ENCODE measurements at regions of chr6 and their contacts with region 1.

Region 1: GRCh38 chr6:73817253-73817652 is 121.2 kb downstream of the CD109 start:
- DNase-seq: no peak
- H3K4me3 ChIP-seq: no peak overlapping the region
- H3K27ac ChIP-seq: no peak overlapping the region
- H3K4me1 ChIP-seq: no peaks in the 10 kb centered on the region
- H3K27me3 ChIP-seq: no peaks in the 10 kb centered on the region
- CTCF ChIP-seq: no peak
- EP300 ChIP-seq: no peak
- POLR2A ChIP-seq: no peak
- RAD21 ChIP-seq: no peak

Region 2: DNA sequence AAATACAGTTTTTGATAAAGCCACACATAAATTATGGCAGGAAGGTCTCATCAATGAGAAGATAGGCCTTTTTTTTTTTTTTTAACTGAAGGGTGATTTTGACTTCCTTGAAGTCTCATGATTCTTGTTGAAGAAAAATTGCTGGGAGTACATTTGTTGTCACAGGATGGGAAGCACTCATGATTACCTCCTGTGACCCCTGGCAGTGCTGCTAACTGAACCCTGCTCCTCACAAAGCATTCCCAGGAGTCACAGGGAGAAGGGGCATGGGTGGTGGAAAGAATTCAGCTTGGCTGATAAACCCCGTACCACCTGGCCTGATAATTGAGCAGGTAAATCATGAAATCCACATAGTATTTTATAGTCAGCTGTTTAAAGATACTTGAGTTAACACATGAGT is 34.3 kb before region 1 on chr6:
- CTCF ChIA-PET with region 1: no interaction called
- POLR2A ChIA-PET with region 1: no interaction called
- DNase-seq: no peak
- H3K4me3 ChIP-seq: no peak overlapping the region
- H3K27ac ChIP-seq: no peak overlapping the region
- H3K4me1 ChIP-seq: no peaks in the 10 kb centered on the region
- H3K27me3 ChIP-seq: no peaks in the 10 kb centered on the region
- CTCF ChIP-seq: no peak
- EP300 ChIP-seq: no peak
- POLR2A ChIP-seq: no peak
- RAD21 ChIP-seq: no peak

Region 3: GRCh38 chr6:73803562-73804241 is 13.6 kb before region 1 on chr6:
- CTCF ChIA-PET with region 1: interaction called, 13 read pairs
- POLR2A ChIA-PET with region 1: interaction called, 3 read pairs
- DNase-seq: peak in 1 of 2 experiments; percentile 60
- H3K4me3 ChIP-seq: no peak overlapping the region
- H3K27ac ChIP-seq: no peak overlapping the region
- H3K4me1 ChIP-seq: no peaks in the 10 kb centered on the region
- H3K27me3 ChIP-seq: no peaks in the 10 kb centered on the region
- CTCF ChIP-seq: peak; percentile 67 to 85 (median 73)
- EP300 ChIP-seq: no peak
- POLR2A ChIP-seq: no peak
- RAD21 ChIP-seq: peak; percentile 48 to 58; a peak in 3 of 4 replicates

Region 4: DNA sequence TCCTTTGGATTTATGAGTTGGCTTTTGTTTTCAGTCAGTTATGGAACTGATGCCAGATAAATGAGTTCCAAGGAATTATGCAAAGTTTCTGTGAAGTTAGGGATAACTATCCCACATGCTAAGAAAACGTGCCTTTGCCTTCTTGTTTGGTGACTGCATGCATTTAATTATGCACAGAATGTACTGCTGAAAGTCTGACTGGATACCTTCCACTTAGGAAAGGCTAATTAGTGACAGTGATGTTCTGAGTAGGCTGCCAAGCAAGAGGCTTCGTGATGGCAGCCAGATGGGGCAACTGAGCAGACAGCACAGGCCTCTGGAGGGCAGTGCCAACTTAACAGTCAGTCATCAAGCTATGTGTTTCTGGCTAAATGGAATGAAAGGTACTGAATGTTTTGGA is 168.6 kb after region 1 on chr6:
- CTCF ChIA-PET with region 1: no interaction called
- POLR2A ChIA-PET with region 1: no interaction called
- DNase-seq: peak in 1 of 2 experiments; percentile 7
- H3K4me3 ChIP-seq: no peak overlapping the region
- H3K27ac ChIP-seq: no peak overlapping the region
- H3K4me1 ChIP-seq: no peaks in the 10 kb centered on the region
- H3K27me3 ChIP-seq: no peaks in the 10 kb centered on the region
- CTCF ChIP-seq: peak; percentile 59 to 80 (median 60)
- EP300 ChIP-seq: no peak
- POLR2A ChIP-seq: no peak
- RAD21 ChIP-seq: peak; percentile 60 to 68